Panc1 (cell line): ENCODE measurements at regions of chr1 and their contacts with region 1.

Region 1: DNA sequence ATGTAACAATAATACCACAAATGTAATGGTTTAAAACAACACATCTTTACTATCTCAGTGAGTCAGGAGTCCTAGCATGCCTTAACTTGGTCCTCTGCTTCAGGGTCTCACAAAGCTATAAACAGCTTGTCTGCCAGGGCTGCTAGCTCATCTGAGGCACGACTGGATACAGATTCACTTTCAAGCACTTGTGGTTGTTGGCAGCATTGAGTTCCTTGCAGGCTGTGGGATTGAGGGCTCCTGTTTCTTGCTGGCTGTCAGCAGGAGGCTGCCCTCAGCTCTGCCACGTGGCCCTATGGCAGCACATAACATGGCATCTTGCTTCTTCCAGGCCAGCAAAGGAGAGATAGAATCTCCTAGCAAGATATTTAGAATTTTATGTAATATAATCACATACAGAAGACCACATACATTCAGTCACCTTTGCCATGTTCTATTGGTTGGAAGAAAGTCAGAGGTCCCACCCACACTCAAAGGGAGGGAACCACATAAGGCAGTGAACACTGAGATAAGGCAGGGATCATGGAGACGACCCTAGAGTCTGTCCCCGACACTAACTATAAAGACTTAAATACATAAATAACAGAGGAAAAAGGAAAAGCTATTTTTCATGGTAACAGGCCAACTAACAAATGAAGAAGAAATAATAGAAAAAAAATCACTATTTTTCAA is 18.9 kb upstream of the IPP start:
- DNase-seq: no peak
- ATAC-seq: peak; percentile 78
- H3K4me3 ChIP-seq: no peak overlapping the region
- H3K27ac ChIP-seq: no peak overlapping the region
- H3K4me1 ChIP-seq: no peaks in the 10 kb centered on the region
- H3K27me3 ChIP-seq: no peaks in the 10 kb centered on the region
- CTCF ChIP-seq: no peak

Region 2: DNA sequence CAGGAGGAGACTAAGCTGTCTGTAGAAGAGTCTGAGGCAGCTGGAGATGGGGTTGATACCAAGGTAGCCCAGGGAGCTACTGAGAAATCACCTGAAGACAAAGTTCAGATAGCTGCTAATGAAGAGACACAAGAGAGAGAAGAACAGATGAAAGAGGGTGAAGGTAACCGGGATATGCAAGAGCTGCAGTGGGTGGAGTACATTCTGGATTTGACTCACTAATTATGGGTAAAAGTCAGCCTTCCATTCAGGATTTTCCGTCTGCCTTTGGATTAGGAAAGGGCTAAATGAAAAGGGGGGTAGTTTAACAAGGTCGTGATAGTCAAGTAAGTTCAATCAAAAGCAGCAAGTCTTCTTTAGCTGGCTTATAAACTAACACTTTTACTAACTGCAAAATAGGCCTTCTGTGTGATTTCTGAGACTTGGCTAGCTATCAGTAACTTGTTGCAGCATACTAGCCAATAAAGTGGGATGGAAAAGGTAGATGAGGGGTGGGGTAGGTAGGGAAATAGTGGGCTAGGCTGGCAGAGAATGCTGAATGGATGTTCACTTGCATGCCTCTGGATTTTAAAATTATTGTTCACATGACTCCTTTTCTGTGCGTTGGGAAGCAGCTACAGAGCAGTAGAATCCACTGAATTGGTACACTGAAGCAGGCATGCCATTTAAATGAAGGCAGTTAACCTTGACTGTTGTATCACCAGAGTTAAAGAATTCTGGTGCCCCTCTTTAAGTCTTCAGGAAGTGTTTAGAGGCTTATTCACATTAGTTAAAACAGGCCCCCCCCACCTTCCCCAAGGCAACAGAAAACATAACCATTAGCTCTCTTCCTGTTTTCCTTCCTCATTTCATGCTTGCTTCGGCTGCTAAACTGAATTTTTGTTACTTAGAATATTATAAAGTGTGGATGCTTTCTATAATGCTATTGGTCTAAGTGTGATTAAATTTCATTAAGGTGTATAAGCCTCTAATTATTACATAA is 160.9 kb before region 1 on chr1:
- CTCF ChIA-PET with region 1: no interaction called
- POLR2A ChIA-PET with region 1: no interaction called
- in situ Hi-C with region 1: no loop called
- intact Hi-C with region 1: no loop called
- DNase-seq: no peak
- ATAC-seq: no peak
- H3K4me3 ChIP-seq: no peak overlapping the region
- H3K27ac ChIP-seq: no peak overlapping the region
- H3K4me1 ChIP-seq: no peaks in the 10 kb centered on the region
- H3K27me3 ChIP-seq: no peaks in the 10 kb centered on the region
- CTCF ChIP-seq: no peak

Region 3: DNA sequence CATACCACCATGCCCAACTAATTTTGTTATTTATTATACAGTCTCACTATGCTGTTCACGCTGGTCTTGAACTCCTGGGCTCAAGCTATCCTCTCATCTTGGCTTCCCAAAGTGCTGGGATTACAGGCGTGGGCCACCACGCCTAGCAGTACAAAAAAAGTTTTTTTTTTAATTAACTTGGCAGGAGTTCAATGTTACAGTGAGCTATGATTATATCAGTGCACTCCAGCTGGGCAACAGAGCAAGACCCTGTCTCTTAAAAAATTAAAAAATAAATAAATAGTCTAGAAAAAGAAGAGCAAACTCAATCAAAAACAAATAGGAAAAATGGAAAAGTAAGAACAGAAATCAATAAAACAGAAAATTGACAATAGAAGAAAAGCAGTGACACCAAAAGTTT is 55.7 kb before region 1 on chr1:
- CTCF ChIA-PET with region 1: no interaction called
- POLR2A ChIA-PET with region 1: no interaction called
- in situ Hi-C with region 1: no loop called
- intact Hi-C with region 1: no loop called
- DNase-seq: no peak
- ATAC-seq: no peak
- H3K4me3 ChIP-seq: no peak overlapping the region
- H3K27ac ChIP-seq: no peak overlapping the region
- H3K4me1 ChIP-seq: no peaks in the 10 kb centered on the region
- H3K27me3 ChIP-seq: no peaks in the 10 kb centered on the region
- CTCF ChIP-seq: no peak

Region 4: DNA sequence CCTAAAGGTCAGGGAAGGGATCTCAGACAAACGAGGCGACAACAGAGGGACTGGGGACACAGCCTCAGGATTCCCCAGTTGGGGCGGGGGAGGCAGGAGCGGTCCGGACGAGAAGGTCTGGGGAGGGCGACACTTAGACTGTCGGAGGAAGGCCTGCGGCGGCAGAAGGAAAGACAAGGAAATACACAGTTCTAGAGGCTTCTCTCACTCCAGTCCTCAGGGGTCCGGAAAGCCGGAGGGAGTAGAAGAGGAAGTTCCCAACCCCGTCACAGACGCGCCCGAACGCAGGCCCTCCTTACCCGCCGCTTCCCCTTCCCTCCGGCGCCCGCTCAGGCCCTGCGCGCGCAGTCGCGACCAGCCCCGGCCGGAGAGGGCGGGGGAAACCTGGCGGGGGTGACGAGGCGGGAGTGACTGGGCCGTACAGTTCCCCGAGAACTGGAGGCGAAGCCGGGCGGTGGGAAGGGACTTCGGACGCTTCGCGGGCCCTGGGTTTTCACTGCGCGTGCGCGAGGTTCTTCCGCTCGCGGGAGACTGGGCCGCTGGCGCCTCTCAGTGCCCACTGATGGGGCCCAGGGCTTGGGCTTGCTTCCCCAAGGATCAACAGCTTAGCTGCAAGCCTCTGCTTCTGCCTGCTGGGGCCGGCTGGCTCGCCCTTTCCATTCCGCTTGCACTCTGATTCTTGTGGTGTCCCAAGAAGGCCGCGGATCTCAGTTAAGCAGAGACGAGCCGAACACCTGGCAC is 18.9 kb before region 1 on chr1 and contains the start of gene IPP:
- CTCF ChIA-PET with region 1: interaction called, 3 read pairs
- POLR2A ChIA-PET with region 1: interaction called, 24 read pairs
- in situ Hi-C with region 1: no loop called
- intact Hi-C with region 1: no loop called
- DNase-seq: peak; percentile 81
- ATAC-seq: peak; percentile 99
- H3K4me3 ChIP-seq: peak within 1 kb of the TSS; percentile 76 to 93
- H3K27ac ChIP-seq: peak within 1 kb of the TSS; percentile 98
- H3K4me1 ChIP-seq: peaks cover 2% of the 10 kb centered on the region; the same call in 1 of the 2 replicates
- H3K27me3 ChIP-seq: no peaks in the 10 kb centered on the region
- CTCF ChIP-seq: no peak; the same call in 1 of the 2 replicates
- total RNA-seq, gene IPP: 28.8 TPM